ENCODE measurements at regions of chr1 and their contacts with region 1.

Region 1: GRCh38 chr1:102002057-102002456 is 5.3 kb upstream of the OLFM3 start:
- DNase-seq: no peak
- H3K4me3 ChIP-seq: no peak overlapping the region
- H3K27ac ChIP-seq: no peak overlapping the region
- H3K4me1 ChIP-seq: no peaks in the 10 kb centered on the region
- H3K27me3 ChIP-seq: no peaks in the 10 kb centered on the region
- CTCF ChIP-seq: no peak

Region 2: GRCh38 chr1:102178483-102178882 is 176.4 kb after region 1 on chr1:
- intact Hi-C with region 1: loop called (anchors 5 kb)
- DNase-seq: no peak
- H3K4me3 ChIP-seq: no peak overlapping the region
- H3K27ac ChIP-seq: no peak overlapping the region
- H3K4me1 ChIP-seq: no peaks in the 10 kb centered on the region
- H3K27me3 ChIP-seq: no peaks in the 10 kb centered on the region
- CTCF ChIP-seq: no peak